ENCODE measurements at regions of chr12 and their contacts with region 1.

Region 1: DNA sequence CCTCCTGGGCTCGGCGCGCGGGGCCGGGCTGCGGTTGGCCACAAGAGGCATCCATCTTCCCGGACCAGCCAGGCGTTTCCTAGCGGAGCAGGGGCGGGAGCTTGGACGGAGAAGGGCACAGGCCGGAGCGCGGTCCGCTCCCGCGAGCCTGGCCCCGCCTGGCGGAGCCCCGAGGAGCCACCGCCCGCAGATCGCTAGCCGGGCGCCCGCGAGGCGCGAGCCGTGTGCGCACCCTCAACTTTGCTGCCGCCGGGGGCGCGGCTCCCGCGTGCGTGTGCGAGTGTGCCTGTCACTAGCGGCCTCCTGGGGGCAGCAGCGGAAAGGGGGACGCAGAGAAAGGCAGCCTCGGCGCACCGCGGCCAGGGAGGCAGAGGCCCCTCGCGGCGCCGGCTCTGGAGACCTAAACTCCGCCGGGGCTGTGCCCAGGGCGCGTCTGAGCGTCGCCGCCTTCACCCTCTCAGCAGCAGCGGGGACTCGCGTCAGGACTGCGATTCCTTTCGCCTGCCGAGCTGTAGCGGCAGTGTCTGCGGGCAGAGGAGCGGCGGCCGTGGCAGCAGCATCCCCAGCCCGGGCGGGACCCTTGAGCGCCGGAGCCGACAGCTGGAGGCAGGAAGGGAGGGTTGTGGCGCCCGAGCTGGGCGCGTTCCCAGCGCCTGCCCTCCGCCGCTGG is 644 bp upstream of the SRGAP1 start:
- DNase-seq: peak; percentile 92
- CTCF ChIP-seq: peak; percentile 93

Region 2: GRCh38 chr12:64256166-64256800 is 412.4 kb after region 1 on chr12:
- in situ Hi-C with region 1: loop called (anchors 10 kb)
- DNase-seq: peak; percentile 48
- CTCF ChIP-seq: peak; percentile 31

Measured in GM13976 (cell line).